Lower leg skin (tissue), 4 donors: ENCODE measurements at regions of chr11 and their contacts with region 1.

Region 1: GRCh38 chr11:126403658-126404057 is 48.2 kb downstream of the ST3GAL4 start:
- DNase-seq: no peak
- H3K4me3 ChIP-seq: no peak overlapping the region
- CTCF ChIP-seq: no peak
- POLR2A ChIP-seq: no peak

Region 2: DNA sequence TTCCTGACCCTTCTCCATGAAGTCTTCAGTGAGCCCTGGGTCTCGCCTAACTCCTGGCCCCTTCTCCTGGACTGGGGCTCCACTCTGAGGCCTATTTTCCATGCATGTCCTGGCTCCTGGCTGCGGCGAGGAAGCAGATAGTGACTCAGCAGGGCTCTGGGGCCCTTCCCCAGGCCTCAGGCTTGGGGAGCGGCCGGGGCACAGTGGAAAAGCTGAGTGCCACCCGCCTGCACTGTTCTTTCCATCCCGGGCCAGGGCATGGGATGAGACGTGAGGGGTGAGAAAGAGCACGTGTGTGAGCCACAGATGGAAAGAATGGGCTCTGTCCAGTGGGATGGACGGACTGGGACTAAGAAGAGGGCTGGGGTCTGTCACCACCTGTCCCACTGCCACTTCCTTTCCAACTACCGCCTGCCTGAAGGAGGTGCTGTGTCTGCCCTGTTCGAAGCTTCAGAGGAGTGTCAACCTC is 1327.8 kb before region 1 on chr11:
- intact Hi-C with region 1: loop called (anchors 5 kb)
- DNase-seq: peak in 1 of 2 donors; percentile 86
- H3K4me3 ChIP-seq: no peak overlapping the region
- CTCF ChIP-seq: no peak
- POLR2A ChIP-seq: no peak